ENCODE measurements at regions of chr13 and their contacts with region 1.

Region 1: GRCh38 chr13:43878892-43879754 is at the start of gene CCDC122:
- DNase-seq: peak; percentile 44 to 81 (median 65)
- ATAC-seq: peak; percentile 91
- H3K4me3 ChIP-seq: peak within 1 kb of the TSS; percentile 60
- H3K4me3 Mint-ChIP-seq: peak within 1 kb of the TSS; percentile 82 to 93 (median 90)
- H3K27ac ChIP-seq: peak within 1 kb of the TSS; percentile 72
- H3K27ac Mint-ChIP-seq: peak within 1 kb of the TSS; percentile 53 to 90 (median 81)
- H3K4me1 ChIP-seq: peaks cover 0 to 9% of the 10 kb centered on the region in 2 donors
- H3K4me1 Mint-ChIP-seq: peaks cover 15 to 27% (median 23%) of the 10 kb centered on the region in 7 donors
- H3K27me3 ChIP-seq: no peaks in the 10 kb centered on the region
- H3K27me3 Mint-ChIP-seq: peaks cover 0 to 33% (median 3%) of the 10 kb centered on the region in 5 donors
- total RNA-seq, gene CCDC122: 1.1 to 2.3 (median 1.4) TPM

Region 2: DNA sequence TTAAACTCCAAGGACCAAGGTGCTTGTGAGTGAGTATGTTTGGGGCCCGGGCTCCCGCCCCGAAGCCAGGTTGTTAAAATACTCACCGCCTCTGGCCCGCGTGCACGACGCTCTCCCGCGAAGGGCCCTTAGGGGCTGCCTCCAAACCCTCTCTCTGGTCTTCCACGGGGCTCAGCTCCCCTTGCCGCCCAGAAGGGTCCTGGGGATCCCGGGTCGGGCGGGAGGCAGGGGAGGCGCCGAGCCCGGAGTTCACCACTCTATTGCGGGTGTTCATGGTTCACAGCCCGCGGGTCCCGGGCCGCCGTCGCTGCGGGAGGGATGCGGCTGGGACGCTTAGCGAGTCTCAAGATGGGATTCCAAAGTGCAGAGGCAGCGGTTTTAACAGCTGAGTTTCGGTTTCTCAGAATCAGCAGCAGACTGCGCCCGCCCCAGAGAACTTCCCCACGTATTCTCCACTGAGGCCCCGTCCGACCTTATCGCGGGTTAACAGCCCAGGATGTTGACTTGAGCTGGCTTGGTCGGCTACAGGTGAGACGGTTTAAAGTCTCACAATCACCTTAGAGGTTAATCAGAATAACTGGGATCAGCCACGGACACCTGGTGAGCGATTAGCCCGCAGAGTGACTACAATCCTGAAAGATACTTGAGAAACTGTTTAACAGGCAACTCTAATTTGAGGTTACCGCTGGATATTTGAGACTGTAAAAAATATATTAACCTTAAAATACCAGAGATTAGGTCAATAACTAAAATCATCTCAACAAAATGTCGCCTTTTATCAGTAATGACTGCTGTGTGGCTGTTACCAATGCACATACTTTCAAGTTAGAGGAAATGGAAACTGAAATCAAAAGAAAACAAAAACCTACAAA is 887.0 kb before region 1 on chr13 and contains the start of gene EPSTI1:
- CTCF ChIA-PET with region 1: no interaction called
- POLR2A ChIA-PET with region 1: no interaction called
- intact Hi-C with region 1: loop called (anchors 2 to 5 kb)
- DNase-seq: peak; percentile 61 to 84 (median 77)
- ATAC-seq: peak; percentile 88
- H3K4me3 ChIP-seq: peak within 1 kb of the TSS; percentile 77
- H3K4me3 Mint-ChIP-seq: peak within 1 kb of the TSS; percentile 92 to 98 (median 96)
- H3K27ac ChIP-seq: peak within 1 kb of the TSS; percentile 94
- H3K27ac Mint-ChIP-seq: peak within 1 kb of the TSS; percentile 99 to 100 (median 100)
- H3K4me1 ChIP-seq: peaks cover 13 to 15% of the 10 kb centered on the region in 2 donors
- H3K4me1 Mint-ChIP-seq: peaks cover 27 to 73% (median 51%) of the 10 kb centered on the region in 7 donors
- H3K27me3 ChIP-seq: no peaks in the 10 kb centered on the region
- H3K27me3 Mint-ChIP-seq: no peaks in the 10 kb centered on the region
- total RNA-seq, gene EPSTI1: 8.4 to 125 (median 11.0) TPM

Region 3: DNA sequence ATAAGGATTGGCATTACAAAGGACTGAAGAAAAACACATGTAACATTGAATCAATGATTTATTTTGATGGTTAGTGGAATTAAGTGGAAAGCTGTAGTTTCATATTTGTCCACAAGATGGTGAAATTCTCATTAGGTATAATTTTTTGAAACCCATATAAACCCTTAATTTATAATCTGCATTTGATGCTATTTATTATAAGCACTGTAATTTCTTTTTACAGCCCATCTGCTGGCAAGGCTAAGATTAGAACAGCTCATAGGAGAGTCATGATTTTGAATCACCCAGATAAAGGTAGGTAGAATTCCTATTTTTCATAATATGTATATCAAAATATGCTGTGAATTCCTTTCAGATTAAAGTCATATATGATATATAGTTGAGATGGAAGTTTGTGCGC is 793.6 kb before region 1 on chr13:
- CTCF ChIA-PET with region 1: interaction called, 3 read pairs
- POLR2A ChIA-PET with region 1: no interaction called
- intact Hi-C with region 1: loop called (anchors 1 to 2 kb)
- DNase-seq: peak in 3 of 9 donors; percentile 5 to 21 (median 7)
- ATAC-seq: no peak
- H3K4me3 ChIP-seq: no peak overlapping the region
- H3K4me3 Mint-ChIP-seq: no peak overlapping the region
- H3K27ac ChIP-seq: no peak overlapping the region
- H3K27ac Mint-ChIP-seq: no peak overlapping the region
- H3K4me1 ChIP-seq: no peaks in the 10 kb centered on the region
- H3K4me1 Mint-ChIP-seq: peaks cover 0 to 18% (median 14%) of the 10 kb centered on the region in 7 donors
- H3K27me3 ChIP-seq: no peaks in the 10 kb centered on the region
- H3K27me3 Mint-ChIP-seq: no peaks in the 10 kb centered on the region

Region 4: GRCh38 chr13:43368003-43368402 is 511.1 kb before region 1 on chr13:
- CTCF ChIA-PET with region 1: no interaction called
- POLR2A ChIA-PET with region 1: no interaction called
- intact Hi-C with region 1: loop called in 1 of 2 experiments (anchors 10 kb)
- DNase-seq: peak in 3 of 9 donors; percentile 5 to 19 (median 11)
- ATAC-seq: no peak
- H3K4me3 ChIP-seq: peak overlapping the region; percentile 58
- H3K4me3 Mint-ChIP-seq: peak overlapping the region; percentile 25 to 87 (median 82)
- H3K27ac ChIP-seq: peak overlapping the region; percentile 34
- H3K27ac Mint-ChIP-seq: peak overlapping the region; percentile 67 to 93 (median 78)
- H3K4me1 ChIP-seq: peaks cover 12 to 14% of the 10 kb centered on the region in 2 donors
- H3K4me1 Mint-ChIP-seq: peaks cover 0 to 42% (median 37%) of the 10 kb centered on the region in 7 donors
- H3K27me3 ChIP-seq: no peaks in the 10 kb centered on the region
- H3K27me3 Mint-ChIP-seq: peaks cover 0 to 4% (median 0%) of the 10 kb centered on the region in 5 donors

Region 5: DNA sequence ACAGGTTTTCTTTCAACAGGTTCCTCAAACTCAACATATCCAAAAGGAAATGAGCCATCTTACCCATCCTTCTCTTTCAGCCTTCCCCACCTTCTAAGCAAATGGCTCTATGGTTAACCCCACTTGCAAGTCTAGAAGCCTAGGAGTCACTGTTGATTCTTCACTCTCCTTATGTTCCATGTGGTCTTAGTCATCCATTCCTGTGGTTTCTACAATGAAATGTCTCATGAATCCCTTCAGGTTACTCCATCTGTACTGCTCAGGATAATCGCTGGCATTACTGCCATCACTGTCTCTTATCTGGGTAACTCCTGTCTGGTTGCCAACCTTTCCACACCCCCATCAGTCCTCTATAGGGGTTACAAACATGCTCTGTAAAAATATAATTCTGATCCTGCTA is 473.7 kb before region 1 on chr13:
- CTCF ChIA-PET with region 1: no interaction called
- POLR2A ChIA-PET with region 1: no interaction called
- intact Hi-C with region 1: no loop called
- DNase-seq: no peak
- ATAC-seq: no peak
- H3K4me3 ChIP-seq: no peak overlapping the region
- H3K4me3 Mint-ChIP-seq: no peak overlapping the region
- H3K27ac ChIP-seq: no peak overlapping the region
- H3K27ac Mint-ChIP-seq: no peak overlapping the region
- H3K4me1 ChIP-seq: no peaks in the 10 kb centered on the region
- H3K4me1 Mint-ChIP-seq: peaks cover 0 to 2% (median 0%) of the 10 kb centered on the region in 7 donors
- H3K27me3 ChIP-seq: no peaks in the 10 kb centered on the region
- H3K27me3 Mint-ChIP-seq: peaks cover 11 to 27% (median 26%) of the 10 kb centered on the region in 5 donors

Region 6: GRCh38 chr13:45340926-45341750 is 1462.0 kb after region 1 on chr13 and contains the start of gene TPT1:
- CTCF ChIA-PET with region 1: no interaction called
- POLR2A ChIA-PET with region 1: no interaction called
- intact Hi-C with region 1: no loop called
- DNase-seq: peak; percentile 99 to 100 (median 99)
- ATAC-seq: peak; percentile 91
- H3K4me3 ChIP-seq: peak within 1 kb of the TSS; percentile 94
- H3K4me3 Mint-ChIP-seq: peak within 1 kb of the TSS; percentile 95 to 100 (median 98)
- H3K27ac ChIP-seq: peak within 1 kb of the TSS; percentile 99
- H3K27ac Mint-ChIP-seq: peak within 1 kb of the TSS; percentile 92 to 100 (median 99)
- H3K4me1 ChIP-seq: peaks cover 35 to 43% of the 10 kb centered on the region in 2 donors
- H3K4me1 Mint-ChIP-seq: peaks cover 35 to 70% (median 57%) of the 10 kb centered on the region in 7 donors
- H3K27me3 ChIP-seq: no peaks in the 10 kb centered on the region
- H3K27me3 Mint-ChIP-seq: no peaks in the 10 kb centered on the region
- total RNA-seq, gene TPT1: 4,230 to 13,134 (median 7,796) TPM

Measured in naive thymus-derived CD4-positive, alpha-beta T cell (primary cell).